ENCODE measurements at regions of chr2 and their contacts with region 1.

Region 1: DNA sequence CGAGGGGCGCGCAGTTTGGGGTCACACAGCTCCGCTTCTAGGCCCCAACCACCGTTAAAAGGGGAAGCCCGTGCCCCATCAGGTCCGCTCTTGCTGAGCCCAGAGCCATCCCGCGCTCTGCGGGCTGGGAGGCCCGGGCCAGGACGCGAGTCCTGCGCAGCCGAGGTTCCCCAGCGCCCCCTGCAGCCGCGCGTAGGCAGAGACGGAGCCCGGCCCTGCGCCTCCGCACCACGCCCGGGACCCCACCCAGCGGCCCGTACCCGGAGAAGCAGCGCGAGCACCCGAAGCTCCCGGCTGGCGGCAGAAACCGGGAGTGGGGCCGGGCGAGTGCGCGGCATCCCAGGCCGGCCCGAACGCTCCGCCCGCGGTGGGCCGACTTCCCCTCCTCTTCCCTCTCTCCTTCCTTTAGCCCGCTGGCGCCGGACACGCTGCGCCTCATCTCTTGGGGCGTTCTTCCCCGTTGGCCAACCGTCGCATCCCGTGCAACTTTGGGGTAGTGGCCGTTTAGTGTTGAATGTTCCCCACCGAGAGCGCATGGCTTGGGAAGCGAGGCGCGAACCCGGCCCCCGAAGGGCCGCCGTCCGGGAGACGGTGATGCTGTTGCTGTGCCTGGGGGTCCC is at the start of gene ITGA4:
- DNase-seq: peak; percentile 93
- H3K4me3 ChIP-seq: peak within 1 kb of the TSS; percentile 91
- H3K27ac ChIP-seq: peak within 1 kb of the TSS; percentile 95
- H3K4me1 ChIP-seq: peaks cover 44% of the 10 kb centered on the region
- CTCF ChIP-seq: peak; percentile 85
- total RNA-seq, gene ITGA4: 55.1 and 61.8 TPM in 2 replicates

Region 2: DNA sequence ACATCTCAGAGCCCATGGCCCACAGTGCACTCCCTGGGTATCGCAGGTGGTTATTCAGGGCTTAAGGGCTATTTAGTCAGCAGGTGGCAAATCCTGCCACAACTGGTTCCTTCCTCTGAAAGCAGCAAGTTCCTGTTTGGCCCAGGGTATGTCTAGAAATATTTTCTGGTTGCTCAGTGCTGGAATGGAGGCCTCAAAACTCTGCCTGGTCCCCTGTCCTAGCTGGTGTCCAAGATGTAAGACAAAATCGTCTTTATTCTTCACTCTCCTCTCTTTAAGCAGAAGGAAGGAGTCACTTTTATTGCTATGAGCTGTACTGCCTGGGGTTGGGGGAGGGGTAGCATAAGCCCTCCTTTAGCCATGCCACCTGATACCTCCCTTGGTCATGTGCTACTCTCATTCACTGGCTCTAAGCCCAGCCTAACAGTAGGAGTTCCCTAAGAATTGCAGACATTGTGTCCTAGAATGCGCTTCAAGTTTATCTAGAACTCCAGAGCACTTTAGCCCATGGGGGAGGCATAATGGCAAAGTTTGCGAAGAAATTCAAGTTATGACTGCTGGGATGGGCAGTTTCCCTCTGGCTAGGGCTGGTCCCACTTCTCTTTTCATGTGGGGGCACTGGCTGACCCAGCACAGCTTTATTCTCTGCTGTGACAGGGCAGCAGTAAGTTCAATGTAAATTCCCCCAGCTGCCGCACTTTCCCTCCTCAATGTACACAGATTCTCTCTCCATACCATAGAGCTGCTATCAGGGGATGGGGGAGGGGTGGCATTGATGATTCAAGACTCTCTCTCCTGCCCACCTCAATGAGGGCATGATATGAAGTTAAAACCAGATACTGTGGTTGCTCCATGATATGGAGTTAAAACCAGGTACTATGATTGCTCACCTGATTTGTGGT is 1423.0 kb before region 1 on chr2:
- CTCF ChIA-PET with region 1: no interaction called
- POLR2A ChIA-PET with region 1: no interaction called
- intact Hi-C with region 1: no loop called
- DNase-seq: peak; percentile 49
- H3K4me3 ChIP-seq: no peak overlapping the region
- H3K27ac ChIP-seq: no peak overlapping the region
- H3K4me1 ChIP-seq: peaks cover 10% of the 10 kb centered on the region
- CTCF ChIP-seq: no peak

Region 3: DNA sequence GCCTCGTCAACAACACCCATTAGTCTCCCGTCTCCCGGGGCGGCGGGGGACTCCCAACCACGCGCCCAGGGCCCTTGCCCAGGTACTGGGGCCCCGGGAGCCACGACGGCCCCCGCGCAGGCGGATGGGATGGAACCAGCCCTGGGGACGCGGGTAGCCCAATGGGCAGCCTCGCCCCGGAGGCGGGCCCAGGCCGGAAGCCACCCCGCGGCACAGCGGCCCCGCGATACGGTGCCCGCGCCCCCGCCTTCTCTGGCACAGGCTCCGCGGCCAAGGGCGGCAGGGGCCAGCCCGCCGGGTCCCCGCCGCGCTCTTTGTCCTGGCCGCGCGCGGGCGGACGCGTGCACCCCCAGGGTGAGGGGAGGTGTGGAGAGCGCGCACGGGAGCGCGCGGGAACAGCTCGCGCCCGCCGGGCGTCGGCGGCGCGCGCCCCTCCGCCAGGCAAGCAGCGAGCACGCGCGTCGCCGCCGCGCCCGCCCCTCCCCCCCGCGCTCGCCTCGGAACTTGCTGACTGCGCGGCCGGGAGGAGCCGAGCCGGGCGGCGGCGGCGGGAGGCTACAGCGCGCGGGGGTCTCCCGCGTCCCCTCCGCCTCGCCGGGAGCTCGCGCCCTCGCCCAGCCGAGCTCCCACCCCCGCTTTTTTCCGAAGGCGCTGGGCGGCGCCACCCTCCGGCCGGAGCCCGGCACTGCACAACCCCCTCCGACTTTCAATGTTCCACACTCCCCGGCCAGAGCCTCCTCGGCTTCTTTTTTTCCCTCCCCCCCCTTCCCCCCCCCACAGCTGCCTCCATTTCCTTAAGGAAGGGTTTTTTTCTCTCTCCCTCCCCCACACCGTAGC is 476.9 kb before region 1 on chr2 and contains the start of gene UBE2E3:
- CTCF ChIA-PET with region 1: interaction called, 3 read pairs
- POLR2A ChIA-PET with region 1: interaction called, 3 read pairs
- intact Hi-C with region 1: loop called (anchors 5 kb)
- DNase-seq: peak; percentile 81
- H3K4me3 ChIP-seq: peak within 1 kb of the TSS; percentile 88
- H3K27ac ChIP-seq: no peak within 1 kb of the TSS
- H3K4me1 ChIP-seq: peaks cover 38% of the 10 kb centered on the region
- CTCF ChIP-seq: peak; percentile 73
- total RNA-seq, gene UBE2E3: 26.4 and 33.7 TPM in 2 replicates

Region 4: DNA sequence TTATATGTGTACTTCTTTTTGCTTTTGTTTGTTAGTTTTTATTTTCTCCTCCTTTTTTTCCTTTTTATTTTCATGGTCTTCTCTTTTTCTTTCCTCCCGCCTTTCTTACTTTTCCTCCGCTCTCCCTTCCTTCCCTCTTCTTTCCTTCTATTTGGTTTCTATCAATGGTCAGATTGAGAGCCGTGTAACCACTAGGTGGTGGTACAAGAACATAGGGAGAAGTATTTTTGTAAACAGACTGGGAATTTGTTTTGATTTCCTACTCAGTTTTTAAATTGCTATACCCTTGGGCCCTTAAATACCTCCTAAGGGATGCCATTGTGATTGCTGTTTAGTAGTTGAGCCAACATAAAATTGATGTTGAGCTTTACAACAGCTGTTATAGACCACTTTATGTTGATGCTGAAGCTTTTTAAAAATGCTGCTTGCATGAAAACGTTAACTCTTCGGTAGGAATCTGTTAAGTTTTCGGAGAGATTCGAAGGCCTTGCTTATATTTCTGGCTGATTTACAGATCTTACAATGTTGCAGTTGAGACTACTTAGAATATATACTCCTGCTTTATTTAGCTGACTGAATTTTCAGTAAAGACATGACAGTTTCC is 352.6 kb before region 1 on chr2:
- CTCF ChIA-PET with region 1: interaction called, 3 read pairs
- POLR2A ChIA-PET with region 1: no interaction called
- intact Hi-C with region 1: loop called (anchors 1 kb)
- DNase-seq: peak; percentile 33
- H3K4me3 ChIP-seq: no peak overlapping the region
- H3K27ac ChIP-seq: no peak overlapping the region
- H3K4me1 ChIP-seq: no peaks in the 10 kb centered on the region
- CTCF ChIP-seq: peak; percentile 90

Region 5: GRCh38 chr2:181178823-181179412 is 278.3 kb before region 1 on chr2:
- CTCF ChIA-PET with region 1: no interaction called
- POLR2A ChIA-PET with region 1: no interaction called
- intact Hi-C with region 1: loop called (anchors 5 kb)
- DNase-seq: peak; percentile 42
- H3K4me3 ChIP-seq: no peak overlapping the region
- H3K27ac ChIP-seq: no peak overlapping the region
- H3K4me1 ChIP-seq: peaks cover 4% of the 10 kb centered on the region
- CTCF ChIP-seq: peak; percentile 80

Region 6: GRCh38 chr2:181438261-181438660 is 19.0 kb before region 1 on chr2:
- CTCF ChIA-PET with region 1: interaction called, 3 read pairs
- POLR2A ChIA-PET with region 1: interaction called, 5 read pairs
- intact Hi-C with region 1: loop called (anchors 2 kb)
- DNase-seq: peak; percentile 74
- H3K4me3 ChIP-seq: no peak overlapping the region
- H3K27ac ChIP-seq: no peak overlapping the region
- H3K4me1 ChIP-seq: peaks cover 15% of the 10 kb centered on the region
- CTCF ChIP-seq: peak; percentile 84

Region 7: DNA sequence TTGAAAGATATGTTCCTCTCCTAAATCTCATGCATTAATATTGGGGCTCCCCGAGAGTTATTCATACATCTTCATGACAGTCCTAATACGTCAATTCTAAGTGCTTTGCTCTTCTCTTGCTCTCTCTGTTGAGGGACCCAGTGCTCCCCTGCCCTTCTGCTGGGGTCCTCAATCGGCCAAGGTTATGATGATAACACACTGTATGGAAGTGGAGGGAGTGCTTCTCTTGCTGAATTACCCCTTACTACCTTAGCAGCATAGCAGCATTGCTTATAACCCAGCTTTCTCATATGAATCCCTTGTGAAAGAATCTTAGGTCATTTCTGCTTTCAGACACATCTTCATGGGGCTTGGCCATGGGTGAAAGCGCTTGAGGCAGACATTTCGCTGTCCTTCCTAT is 477.5 kb after region 1 on chr2:
- CTCF ChIA-PET with region 1: no interaction called
- POLR2A ChIA-PET with region 1: no interaction called
- intact Hi-C with region 1: no loop called
- DNase-seq: no peak
- H3K4me3 ChIP-seq: no peak overlapping the region
- H3K27ac ChIP-seq: no peak overlapping the region
- H3K4me1 ChIP-seq: no peaks in the 10 kb centered on the region
- CTCF ChIP-seq: no peak

Measured in OCI-LY7 (cell line).